ENCODE measurements at regions of chr7 and their contacts with region 1.

Region 1: DNA sequence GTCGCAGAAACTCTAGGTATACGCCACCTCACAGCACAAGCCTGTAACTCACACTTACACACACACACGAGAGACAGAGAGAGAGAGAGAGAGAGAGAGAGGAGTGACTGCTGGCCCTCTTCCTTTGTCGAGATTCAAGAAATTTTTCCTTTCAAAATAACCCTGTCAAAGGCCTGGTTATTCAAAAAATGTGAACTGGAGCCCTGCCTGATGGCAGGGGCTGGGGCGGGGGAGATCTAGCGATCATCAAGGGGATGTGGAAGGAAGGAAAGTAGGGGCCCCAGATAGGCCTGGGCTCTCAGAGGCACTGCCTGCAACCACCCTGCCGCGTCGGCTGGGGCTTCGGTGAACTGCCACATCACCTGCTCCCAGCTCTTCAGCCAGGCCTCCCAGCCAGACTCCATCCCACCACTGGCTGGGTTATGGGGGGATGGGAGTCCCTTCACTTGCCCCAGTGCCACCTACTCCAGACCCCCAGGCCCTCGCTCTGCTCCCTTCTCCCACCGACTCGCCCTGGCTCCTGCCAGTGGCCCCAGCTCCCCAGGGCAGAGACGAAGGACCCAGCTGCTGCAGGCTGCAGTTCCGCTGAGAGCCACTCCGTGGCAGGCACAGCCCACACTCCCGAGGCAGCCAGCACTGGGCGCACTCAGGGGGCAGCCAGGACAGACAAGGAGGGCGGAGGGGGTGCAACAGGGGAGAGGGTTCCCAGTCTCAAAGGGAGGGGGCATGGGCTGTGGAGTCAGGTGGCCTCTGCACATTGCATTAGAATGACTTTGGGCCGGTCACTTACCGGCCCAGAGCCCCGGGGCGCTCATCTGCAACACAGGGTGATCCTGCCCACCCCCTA is 15.3 kb downstream of the KCNH2 start:
- DNase-seq: peak; percentile 69 to 70
- ATAC-seq: peak; percentile 43 to 72 (median 54)
- H3K4me3 ChIP-seq: no peak overlapping the region
- H3K27ac ChIP-seq: peak overlapping the region; percentile 57 to 93 (median 88)
- H3K4me1 ChIP-seq: peaks cover 12 to 94% (median 50%) of the 10 kb centered on the region in 9 donors
- H3K27me3 ChIP-seq: peaks cover 0 to 53% (median 21%) of the 10 kb centered on the region in 7 donors
- CTCF ChIP-seq: peak; percentile 67 to 92 (median 88)

Region 2: GRCh38 chr7:150903606-150904005 is 59.2 kb before region 1 on chr7:
- intact Hi-C with region 1: loop called in 5 of 10 experiments (anchors 5 to 10 kb)
- DNase-seq: peak; percentile 77 to 82
- ATAC-seq: peak; percentile 75 to 98 (median 94)
- H3K4me3 ChIP-seq: no peak overlapping the region
- H3K27ac ChIP-seq: peak overlapping the region in 8 of 10 donors; percentile 2 to 71 (median 46)
- H3K4me1 ChIP-seq: peaks cover 0 to 35% (median 11%) of the 10 kb centered on the region in 9 donors
- H3K27me3 ChIP-seq: peaks cover 0 to 55% (median 17%) of the 10 kb centered on the region in 7 donors
- CTCF ChIP-seq: peak in 3 of 9 donors; percentile 14 to 22 (median 17)

Region 3: DNA sequence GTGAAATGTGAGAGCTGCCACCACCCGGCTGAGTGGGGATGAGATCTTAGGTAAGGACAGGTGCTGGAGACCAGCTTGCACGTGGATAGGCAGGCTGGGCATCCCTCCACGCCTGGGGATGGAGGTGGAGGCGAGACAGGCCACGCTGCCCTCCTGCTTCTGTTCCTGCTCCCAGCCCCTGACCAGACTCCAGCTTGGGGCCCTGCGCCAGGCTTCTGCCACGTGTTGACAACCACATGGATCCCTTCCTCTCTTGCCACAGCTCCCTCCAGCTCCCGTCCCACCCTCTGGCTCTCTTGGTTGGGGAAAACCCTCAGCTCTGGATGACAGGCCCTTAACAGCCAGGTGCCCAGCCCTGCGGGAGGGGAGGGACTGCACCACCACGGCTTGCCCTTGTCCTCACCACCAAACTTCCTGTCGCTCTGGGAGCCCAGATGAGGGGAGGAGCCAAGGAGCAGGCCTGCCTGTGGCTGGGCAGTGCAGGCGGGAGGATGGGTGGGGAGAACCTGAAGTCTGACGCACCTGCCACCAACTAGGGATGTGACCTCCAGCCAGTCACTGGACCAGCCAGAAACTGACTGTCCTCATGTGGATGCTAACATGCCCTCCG is 20.7 kb before region 1 on chr7:
- intact Hi-C with region 1: no loop called
- DNase-seq: peak; percentile 66 to 73
- ATAC-seq: peak; percentile 49 to 78 (median 59)
- H3K4me3 ChIP-seq: no peak overlapping the region
- H3K27ac ChIP-seq: peak overlapping the region in 4 of 10 donors; percentile 36 to 60 (median 52)
- H3K4me1 ChIP-seq: peaks cover 3 to 40% (median 23%) of the 10 kb centered on the region in 9 donors
- H3K27me3 ChIP-seq: peaks cover 0 to 31% (median 10%) of the 10 kb centered on the region in 7 donors
- CTCF ChIP-seq: no peak

Region 4: DNA sequence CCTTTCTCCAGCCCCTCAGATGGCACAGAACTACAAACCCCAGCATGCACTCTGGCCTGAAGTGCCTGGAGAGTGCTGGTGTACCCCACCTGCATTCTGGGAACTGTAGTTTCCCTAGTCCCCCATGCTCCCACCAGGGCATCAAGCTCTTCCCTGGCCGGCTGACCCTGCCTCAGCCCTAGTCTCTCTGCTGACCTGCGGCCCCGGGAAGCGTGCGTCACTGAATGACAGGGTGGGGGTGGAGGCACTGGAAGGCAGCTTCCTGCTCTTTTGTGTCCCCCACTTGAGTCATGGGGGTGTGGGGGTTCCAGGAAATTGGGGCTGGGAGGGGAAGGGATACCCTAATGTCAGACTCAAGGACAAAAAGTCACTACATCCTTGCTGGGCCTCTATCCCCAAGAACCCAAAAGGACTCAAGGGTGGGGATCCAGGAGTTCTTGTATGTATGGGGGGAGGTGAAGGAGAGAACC is 30.1 kb after region 1 on chr7:
- intact Hi-C with region 1: no loop called
- DNase-seq: peak in 1 of 2 donors; percentile 75
- ATAC-seq: peak; percentile 54 to 72 (median 60)
- H3K4me3 ChIP-seq: peak overlapping the region in 5 of 10 donors; percentile 62 to 66 (median 64)
- H3K27ac ChIP-seq: peak overlapping the region; percentile 65 to 93 (median 86)
- H3K4me1 ChIP-seq: peaks cover 8 to 77% (median 41%) of the 10 kb centered on the region in 9 donors
- H3K27me3 ChIP-seq: no peaks in the 10 kb centered on the region
- CTCF ChIP-seq: no peak

Region 5: GRCh38 chr7:151017953-151018420 is 55.2 kb after region 1 on chr7:
- intact Hi-C with region 1: loop called in 2 of 10 experiments (anchors 5 to 10 kb)
- DNase-seq: peak; percentile 67 to 77
- ATAC-seq: peak; percentile 55 to 80 (median 69)
- H3K4me3 ChIP-seq: peak overlapping the region in 7 of 10 donors; percentile 9 to 37 (median 22)
- H3K27ac ChIP-seq: no peak overlapping the region
- H3K4me1 ChIP-seq: peaks cover 9 to 49% (median 31%) of the 10 kb centered on the region in 9 donors
- H3K27me3 ChIP-seq: peaks cover 0 to 56% (median 53%) of the 10 kb centered on the region in 7 donors
- CTCF ChIP-seq: peak; percentile 85 to 97 (median 95)

Measured in heart right ventricle (tissue), 16 donors.